Endothelial cell of umbilical vein (primary cell): ENCODE measurements at regions of chr12 and their contacts with region 1.

Region 1: GRCh38 chr12:88993651-88994050 is 358.6 kb downstream of the DUSP6 start:
- DNase-seq: peak; percentile 84
- H3K4me3 ChIP-seq: no peak overlapping the region
- H3K27ac ChIP-seq: no peak overlapping the region
- H3K4me1 ChIP-seq: peaks cover 9% of the 10 kb centered on the region
- H3K27me3 ChIP-seq: no peaks in the 10 kb centered on the region
- CTCF ChIP-seq: peak; percentile 36 to 37
- POLR2A ChIP-seq: no peak

Region 2: DNA sequence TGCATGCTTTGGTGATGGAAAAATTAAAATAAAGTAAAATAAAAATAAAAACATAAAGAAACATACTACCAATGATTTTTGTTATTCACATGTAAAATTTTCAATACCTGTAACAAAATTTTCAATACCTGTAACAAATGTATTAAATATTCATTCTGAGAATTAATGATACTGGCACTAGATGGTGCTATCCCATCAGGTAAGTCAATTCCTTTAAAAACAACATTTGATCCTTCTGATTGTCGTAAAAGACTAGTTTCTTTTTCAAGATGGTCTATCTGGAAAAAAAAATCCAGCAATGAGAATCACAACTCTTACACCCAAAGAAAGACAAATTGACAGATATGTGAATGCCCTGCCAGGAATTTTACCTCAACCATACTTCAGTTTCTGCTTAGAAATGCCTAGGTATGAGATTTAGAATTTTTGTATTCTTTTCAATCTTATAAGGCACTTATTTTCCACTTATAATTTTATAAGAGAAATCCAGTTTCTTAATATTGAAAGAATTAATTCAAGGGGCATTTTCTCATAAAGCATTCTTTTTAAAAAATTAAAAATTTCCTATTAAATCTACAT is 882.5 kb before region 1 on chr12:
- CTCF ChIA-PET with region 1: interaction called, 4 read pairs
- POLR2A ChIA-PET with region 1: no interaction called
- dilution Hi-C with region 1: no loop called
- intact Hi-C with region 1: loop called (anchors 1 kb)
- DNase-seq: peak; percentile 67
- H3K4me3 ChIP-seq: peak overlapping the region in 1 of 3 experiments; percentile 61
- H3K27ac ChIP-seq: peak overlapping the region; percentile 20
- H3K4me1 ChIP-seq: peaks cover 5% of the 10 kb centered on the region
- H3K27me3 ChIP-seq: no peaks in the 10 kb centered on the region
- CTCF ChIP-seq: peak in 1 of 2 donors; percentile 2
- POLR2A ChIP-seq: no peak

Region 3: DNA sequence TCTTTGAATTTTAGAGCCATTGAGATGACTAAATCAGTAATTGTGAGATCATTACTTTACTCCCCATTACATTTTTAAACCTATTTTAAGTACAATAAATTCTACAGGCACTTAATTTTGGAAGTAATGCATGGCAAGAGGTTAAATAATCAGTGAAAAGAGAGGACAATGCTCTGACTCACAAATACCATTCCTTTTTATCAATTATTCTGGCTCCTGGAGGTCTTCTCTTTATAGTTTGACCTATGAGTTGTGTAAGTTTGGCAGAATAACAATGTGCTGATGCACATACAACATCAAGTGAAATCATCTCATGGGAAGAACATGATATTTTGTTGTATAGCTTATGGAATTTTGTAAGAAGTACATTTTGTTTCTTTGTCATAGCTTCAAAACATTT is 684.8 kb before region 1 on chr12:
- CTCF ChIA-PET with region 1: interaction called, 3 read pairs
- POLR2A ChIA-PET with region 1: no interaction called
- dilution Hi-C with region 1: no loop called
- intact Hi-C with region 1: loop called (anchors 5 kb)
- DNase-seq: peak; percentile 65
- H3K4me3 ChIP-seq: no peak overlapping the region
- H3K27ac ChIP-seq: peak overlapping the region; percentile 88
- H3K4me1 ChIP-seq: peaks cover 27% of the 10 kb centered on the region
- H3K27me3 ChIP-seq: no peaks in the 10 kb centered on the region
- CTCF ChIP-seq: no peak
- POLR2A ChIP-seq: no peak

Region 4: DNA sequence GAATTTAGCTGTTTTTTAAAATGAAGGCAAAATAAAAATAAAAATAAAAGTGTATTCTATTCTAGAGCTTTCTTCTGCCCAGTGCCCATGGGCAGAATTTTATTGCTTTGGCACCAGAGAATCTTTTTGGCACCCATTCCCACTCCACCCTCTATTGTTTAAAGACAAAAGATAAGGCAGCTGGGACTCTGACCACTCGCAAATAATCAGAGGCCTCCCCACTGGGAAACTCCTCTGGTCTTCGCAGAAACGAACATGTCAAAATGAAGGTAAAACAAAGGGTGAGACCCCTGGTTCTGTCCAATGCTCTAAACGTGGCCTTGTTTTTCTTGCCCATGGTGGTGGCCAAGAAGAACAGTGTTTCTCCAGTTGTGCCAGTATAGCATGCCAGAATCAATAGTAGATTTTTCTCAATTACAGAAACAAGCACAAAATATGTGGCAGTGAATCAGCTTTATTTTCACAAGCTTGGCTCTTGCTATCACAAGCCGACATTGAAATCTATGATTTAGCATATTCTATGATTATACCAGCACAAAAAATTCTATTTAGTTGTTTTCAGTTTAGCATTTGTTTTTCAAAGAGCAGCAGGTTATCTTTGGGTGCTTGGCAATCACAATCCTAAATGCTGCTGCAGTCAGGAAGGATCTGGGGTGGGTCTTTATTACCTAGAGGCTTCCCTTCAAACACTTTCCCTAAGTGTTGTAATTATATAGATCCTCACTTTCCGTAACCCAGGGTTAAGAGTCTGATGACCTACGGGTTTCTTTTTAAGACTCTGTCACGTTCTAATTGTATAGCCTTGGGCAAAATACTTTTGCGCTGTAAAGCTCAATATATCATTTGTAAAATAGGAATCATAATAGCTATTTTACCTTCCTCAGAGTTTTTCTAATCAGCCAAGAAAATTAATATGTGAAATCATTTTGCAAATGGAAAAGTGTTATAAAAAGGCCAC is 463.8 kb before region 1 on chr12:
- CTCF ChIA-PET with region 1: interaction called, 11 read pairs
- POLR2A ChIA-PET with region 1: no interaction called
- dilution Hi-C with region 1: no loop called
- intact Hi-C with region 1: no loop called
- DNase-seq: peak; percentile 58
- H3K4me3 ChIP-seq: no peak overlapping the region
- H3K27ac ChIP-seq: no peak overlapping the region
- H3K4me1 ChIP-seq: peaks cover 3% of the 10 kb centered on the region
- H3K27me3 ChIP-seq: no peaks in the 10 kb centered on the region
- CTCF ChIP-seq: no peak
- POLR2A ChIP-seq: no peak

Region 5: DNA sequence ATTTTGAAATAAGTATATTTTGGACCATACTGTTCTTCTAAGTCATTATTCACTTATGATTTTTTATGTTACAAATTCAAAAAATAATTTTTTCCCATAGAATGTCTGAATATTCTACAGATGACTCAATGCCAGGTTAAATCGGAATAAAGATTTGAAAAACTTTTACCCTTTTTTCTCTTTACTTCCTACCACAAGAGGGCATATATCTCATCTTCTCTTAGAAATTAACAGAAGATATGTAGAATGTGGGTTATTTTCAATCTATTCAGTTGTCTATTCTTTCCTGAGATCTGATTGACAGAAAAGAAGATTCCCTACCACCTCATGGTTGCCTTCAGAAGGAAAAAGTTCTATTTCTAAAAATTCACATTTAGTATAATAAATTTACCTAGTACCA is 360.3 kb before region 1 on chr12:
- CTCF ChIA-PET with region 1: interaction called, 33 read pairs
- POLR2A ChIA-PET with region 1: no interaction called
- dilution Hi-C with region 1: no loop called
- intact Hi-C with region 1: loop called (anchors 1 kb)
- DNase-seq: peak; percentile 8
- H3K4me3 ChIP-seq: no peak overlapping the region
- H3K27ac ChIP-seq: no peak overlapping the region
- H3K4me1 ChIP-seq: peaks cover 3% of the 10 kb centered on the region
- H3K27me3 ChIP-seq: no peaks in the 10 kb centered on the region
- CTCF ChIP-seq: no peak
- POLR2A ChIP-seq: no peak

Region 6: DNA sequence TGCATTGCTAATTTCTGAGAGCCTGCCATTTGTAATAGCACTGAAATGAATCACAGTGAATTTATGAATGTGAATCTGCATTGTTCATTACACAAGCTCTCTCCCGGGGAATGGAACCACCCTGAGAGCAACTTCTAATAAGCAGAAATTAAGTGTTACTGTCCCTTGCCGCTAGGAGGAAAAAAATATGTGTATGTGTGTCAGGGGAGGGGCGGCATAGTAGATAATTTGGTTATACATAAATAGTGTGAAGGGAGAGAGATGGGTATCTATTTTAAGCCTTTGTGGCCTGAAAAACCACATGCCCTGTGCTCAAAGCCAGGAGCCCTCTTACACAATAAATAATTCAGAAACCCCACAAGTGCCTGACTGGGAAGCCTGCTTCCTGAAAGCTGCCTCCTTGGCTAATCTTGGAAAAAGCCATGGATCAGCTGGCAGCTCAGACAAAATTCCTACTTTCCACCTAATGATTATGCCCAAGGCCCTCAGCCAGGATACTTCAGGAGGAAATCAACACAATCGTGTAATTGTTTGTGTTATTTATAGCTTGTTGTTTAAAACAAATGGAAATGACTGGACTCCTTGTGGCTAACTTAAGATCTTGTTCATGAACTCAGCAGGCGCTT is 47.2 kb before region 1 on chr12:
- CTCF ChIA-PET with region 1: interaction called, 14 read pairs
- POLR2A ChIA-PET with region 1: no interaction called
- dilution Hi-C with region 1: no loop called
- intact Hi-C with region 1: loop called (anchors 1 kb)
- DNase-seq: peak; percentile 89
- H3K4me3 ChIP-seq: no peak overlapping the region
- H3K27ac ChIP-seq: peak overlapping the region; percentile 92
- H3K4me1 ChIP-seq: peaks cover 42% of the 10 kb centered on the region
- H3K27me3 ChIP-seq: no peaks in the 10 kb centered on the region
- CTCF ChIP-seq: no peak
- POLR2A ChIP-seq: no peak

Region 7: GRCh38 chr12:88960213-88960878 is 33.3 kb before region 1 on chr12:
- CTCF ChIA-PET with region 1: interaction called, 5 read pairs
- POLR2A ChIA-PET with region 1: no interaction called
- dilution Hi-C with region 1: no loop called
- intact Hi-C with region 1: loop called (anchors 2 kb)
- DNase-seq: peak; percentile 84
- H3K4me3 ChIP-seq: no peak overlapping the region
- H3K27ac ChIP-seq: peak overlapping the region; percentile 60
- H3K4me1 ChIP-seq: peaks cover 14% of the 10 kb centered on the region
- H3K27me3 ChIP-seq: no peaks in the 10 kb centered on the region
- CTCF ChIP-seq: no peak
- POLR2A ChIP-seq: no peak

Region 8: GRCh38 chr12:89106950-89107349 is 113.3 kb after region 1 on chr12:
- CTCF ChIA-PET with region 1: no interaction called
- POLR2A ChIA-PET with region 1: no interaction called
- dilution Hi-C with region 1: no loop called
- intact Hi-C with region 1: no loop called
- DNase-seq: no peak
- H3K4me3 ChIP-seq: no peak overlapping the region
- H3K27ac ChIP-seq: no peak overlapping the region
- H3K4me1 ChIP-seq: no peaks in the 10 kb centered on the region
- H3K27me3 ChIP-seq: no peaks in the 10 kb centered on the region
- CTCF ChIP-seq: no peak
- POLR2A ChIP-seq: no peak